ENCODE measurements at regions of chr9 and their contacts with region 1.

Region 1: GRCh38 chr9:35476596-35476995 is 13.3 kb upstream of the RUSC2 start:
- DNase-seq: no peak

Region 2: GRCh38 chr9:35258676-35259474 is 217.7 kb before region 1 on chr9:
- intact Hi-C with region 1: loop called in 1 of 2 experiments (anchors 5 kb)
- DNase-seq: peak; percentile 90

Region 3: GRCh38 chr9:35374436-35374835 is 102.2 kb before region 1 on chr9:
- intact Hi-C with region 1: no loop called
- DNase-seq: no peak